Panc1 (cell line): ENCODE measurements at regions of chr3 and their contacts with region 1.

Region 1: DNA sequence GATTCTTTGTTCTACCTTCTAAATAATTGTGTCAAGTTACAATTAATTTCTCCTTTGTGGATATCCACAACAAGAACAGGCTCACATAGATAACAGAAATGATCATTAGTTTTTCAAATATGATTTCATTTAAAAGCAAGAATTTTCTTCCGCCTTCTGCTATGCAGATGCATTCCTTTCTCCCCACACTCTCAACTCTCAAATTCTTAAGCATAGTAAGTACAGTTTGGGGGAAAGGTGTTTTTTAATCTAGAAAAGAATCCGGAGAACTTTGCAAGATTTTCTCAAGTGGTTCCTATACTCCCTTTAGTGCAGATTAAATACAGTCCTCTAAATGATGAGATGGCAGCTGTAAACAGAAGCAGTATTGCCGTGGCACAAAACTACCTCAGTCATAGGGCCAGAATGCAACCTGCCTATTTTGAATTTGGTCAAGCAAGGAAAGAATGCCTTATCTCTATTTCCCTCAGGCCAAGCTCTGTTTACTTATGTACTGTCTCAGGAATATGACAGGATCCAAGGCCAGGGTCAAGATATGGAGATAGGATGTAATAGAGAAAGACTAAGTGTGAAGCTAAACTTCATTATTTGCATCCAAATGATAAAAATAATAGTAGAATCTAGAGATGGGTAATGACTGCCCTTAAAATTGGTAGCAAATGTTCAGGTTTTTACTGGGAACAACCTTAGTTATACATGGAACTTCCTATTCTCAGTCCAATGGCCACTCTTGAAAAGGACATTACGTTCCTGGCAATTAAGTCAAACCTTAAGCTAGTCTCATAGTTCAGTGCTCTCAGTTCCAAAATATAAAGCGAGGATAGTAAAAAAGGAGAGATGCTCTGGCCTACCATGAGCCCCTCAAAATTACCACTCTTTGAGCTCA is 77.3 kb upstream of the PHLDB2 start:
- DNase-seq: no peak
- ATAC-seq: no peak; the same call in 1 of the 2 replicates
- H3K4me3 ChIP-seq: no peak overlapping the region
- H3K27ac ChIP-seq: no peak overlapping the region
- H3K4me1 ChIP-seq: no peaks in the 10 kb centered on the region
- H3K27me3 ChIP-seq: no peaks in the 10 kb centered on the region
- CTCF ChIP-seq: no peak

Region 2: DNA sequence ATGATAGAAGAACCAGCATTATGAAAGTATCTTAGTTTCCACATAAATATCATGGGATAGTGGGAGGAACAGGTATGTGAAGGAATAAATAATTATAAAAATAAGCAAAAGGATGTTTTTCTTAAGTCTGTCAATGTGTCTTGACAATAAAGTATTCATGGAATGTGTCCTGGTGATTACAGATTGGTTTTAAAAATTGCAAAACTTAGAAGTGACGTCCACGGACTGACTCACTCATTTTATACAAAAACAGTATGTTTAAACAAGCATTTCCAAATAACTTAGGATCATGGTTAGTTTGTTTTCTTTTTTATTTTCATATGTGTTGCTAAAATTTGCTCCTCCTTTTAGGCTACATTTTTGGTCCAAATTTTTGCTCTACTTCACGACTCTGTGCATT is 1397.2 kb before region 1 on chr3:
- CTCF ChIA-PET with region 1: no interaction called
- POLR2A ChIA-PET with region 1: no interaction called
- in situ Hi-C with region 1: no loop called
- intact Hi-C with region 1: loop called (anchors 5 kb)
- DNase-seq: no peak
- ATAC-seq: no peak
- H3K4me3 ChIP-seq: no peak overlapping the region
- H3K27ac ChIP-seq: no peak overlapping the region
- H3K4me1 ChIP-seq: no peaks in the 10 kb centered on the region
- H3K27me3 ChIP-seq: no peaks in the 10 kb centered on the region
- CTCF ChIP-seq: no peak

Region 3: GRCh38 chr3:111761309-111761831 is 20.4 kb before region 1 on chr3:
- CTCF ChIA-PET with region 1: no interaction called
- POLR2A ChIA-PET with region 1: interaction called, 11 read pairs
- in situ Hi-C with region 1: no loop called
- intact Hi-C with region 1: no loop called
- DNase-seq: no peak
- ATAC-seq: no peak
- H3K4me3 ChIP-seq: no peak overlapping the region
- H3K27ac ChIP-seq: no peak overlapping the region
- H3K4me1 ChIP-seq: no peaks in the 10 kb centered on the region
- H3K27me3 ChIP-seq: no peaks in the 10 kb centered on the region
- CTCF ChIP-seq: no peak